Activated naive CD4-positive, alpha-beta T cell treated with anti-CD3 and anti-CD28 coated beads for 36 hours (primary cell): ENCODE measurements at regions of chrX and their contacts with region 1.

Region 1: GRCh38 chrX:110450050-110450449 is 91.4 kb downstream of the RTL9 start:
- DNase-seq: peak; percentile 68
- H3K4me3 Mint-ChIP-seq: no peak overlapping the region
- H3K27ac Mint-ChIP-seq: no peak overlapping the region
- H3K4me1 Mint-ChIP-seq: no peaks in the 10 kb centered on the region
- H3K27me3 Mint-ChIP-seq: peaks cover 4% of the 10 kb centered on the region

Region 2: DNA sequence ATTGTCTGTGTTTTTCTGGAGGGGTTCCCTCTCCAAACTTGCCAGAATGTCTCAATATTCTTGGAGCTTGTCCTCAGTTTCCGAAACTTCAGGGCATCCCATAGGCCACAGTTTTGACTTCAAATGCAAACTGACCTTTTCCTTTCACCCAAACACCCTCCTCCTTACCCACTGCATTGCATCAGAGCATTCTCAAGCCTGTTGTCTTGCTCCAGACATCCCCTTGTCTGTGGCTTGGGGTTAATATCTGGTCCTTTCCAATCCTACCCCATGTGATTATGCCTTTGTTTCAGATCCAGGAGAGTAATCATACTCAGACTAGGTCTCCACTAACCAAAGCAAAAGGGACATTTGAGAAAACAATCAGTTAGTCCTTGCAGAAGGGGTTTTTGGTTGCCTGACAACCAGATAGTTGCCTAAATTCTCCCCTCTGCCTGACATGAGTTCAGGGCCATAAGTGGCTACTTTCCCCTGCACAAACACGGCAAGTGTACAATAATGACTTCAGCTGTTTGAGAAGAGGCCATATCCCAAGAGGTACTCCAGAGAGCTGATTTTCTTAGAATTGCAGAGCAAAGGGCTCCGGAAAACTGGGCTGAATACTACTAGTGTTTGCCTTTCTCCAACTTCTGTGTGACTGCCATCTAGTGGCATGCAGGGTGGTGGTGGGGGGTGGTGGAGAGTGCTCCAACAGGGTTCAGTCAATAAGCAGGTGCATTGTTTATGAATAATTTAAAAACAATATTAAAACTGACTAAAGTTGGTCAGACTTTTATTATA is 215.4 kb after region 1 on chrX:
- CTCF ChIA-PET with region 1: no interaction called
- intact Hi-C with region 1: loop called (anchors 2 kb)
- DNase-seq: peak; percentile 27
- H3K4me3 Mint-ChIP-seq: no peak overlapping the region
- H3K27ac Mint-ChIP-seq: no peak overlapping the region
- H3K4me1 Mint-ChIP-seq: no peaks in the 10 kb centered on the region
- H3K27me3 Mint-ChIP-seq: no peaks in the 10 kb centered on the region

Region 3: DNA sequence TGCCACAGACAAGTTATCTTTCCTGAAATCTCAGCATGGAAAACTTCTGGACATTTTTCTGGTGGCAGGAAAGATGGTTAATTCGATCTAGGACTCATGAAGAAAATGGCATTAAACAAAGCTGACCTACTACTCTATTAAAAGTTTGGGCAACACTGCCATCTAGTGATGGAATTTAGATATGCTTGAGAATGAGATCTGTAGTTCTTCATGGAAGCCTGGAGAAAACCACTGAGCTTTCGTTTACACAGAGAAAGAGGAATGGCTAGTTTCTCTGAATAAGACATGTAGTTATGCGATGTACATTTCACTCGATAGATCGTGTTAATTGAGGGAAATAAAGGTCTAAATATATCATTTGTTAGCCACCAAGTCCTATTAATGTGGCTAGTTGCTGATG is 397.3 kb after region 1 on chrX:
- CTCF ChIA-PET with region 1: interaction called, 17 read pairs
- intact Hi-C with region 1: loop called (anchors 1 kb)
- DNase-seq: no peak
- H3K4me3 Mint-ChIP-seq: no peak overlapping the region
- H3K27ac Mint-ChIP-seq: no peak overlapping the region
- H3K4me1 Mint-ChIP-seq: no peaks in the 10 kb centered on the region
- H3K27me3 Mint-ChIP-seq: no peaks in the 10 kb centered on the region